Activated CD4-positive, alpha-beta memory T cell treated with anti-CD3 and anti-CD28 coated beads for 36 hours (primary cell): ENCODE measurements at regions of chr22 and their contacts with region 1.

Region 1: GRCh38 chr22:22156716-22157347 is 87.8 kb upstream of the VPREB1 start:
- DNase-seq: peak; percentile 67
- H3K4me3 Mint-ChIP-seq: no peak overlapping the region
- H3K27ac Mint-ChIP-seq: no peak overlapping the region
- H3K4me1 Mint-ChIP-seq: peaks cover 6% of the 10 kb centered on the region
- H3K27me3 Mint-ChIP-seq: peaks cover 5% of the 10 kb centered on the region

Region 2: GRCh38 chr22:21961886-21962654 is 194.8 kb before region 1 on chr22:
- CTCF ChIA-PET with region 1: no interaction called
- POLR2A ChIA-PET with region 1: no interaction called
- intact Hi-C with region 1: no loop called
- DNase-seq: no peak
- H3K4me3 Mint-ChIP-seq: no peak overlapping the region
- H3K27ac Mint-ChIP-seq: no peak overlapping the region
- H3K4me1 Mint-ChIP-seq: no peaks in the 10 kb centered on the region
- H3K27me3 Mint-ChIP-seq: no peaks in the 10 kb centered on the region

Region 3: GRCh38 chr22:22045571-22046335 is 111.1 kb before region 1 on chr22:
- CTCF ChIA-PET with region 1: no interaction called
- POLR2A ChIA-PET with region 1: no interaction called
- intact Hi-C with region 1: no loop called
- DNase-seq: no peak
- H3K4me3 Mint-ChIP-seq: no peak overlapping the region
- H3K27ac Mint-ChIP-seq: no peak overlapping the region
- H3K4me1 Mint-ChIP-seq: no peaks in the 10 kb centered on the region
- H3K27me3 Mint-ChIP-seq: peaks cover 11% of the 10 kb centered on the region

Region 4: GRCh38 chr22:22195265-22196017 is 38.6 kb after region 1 on chr22:
- CTCF ChIA-PET with region 1: interaction called, 10 read pairs
- POLR2A ChIA-PET with region 1: no interaction called
- intact Hi-C with region 1: loop called (anchors 1 kb)
- DNase-seq: peak; percentile 86
- H3K4me3 Mint-ChIP-seq: no peak overlapping the region
- H3K27ac Mint-ChIP-seq: no peak overlapping the region
- H3K4me1 Mint-ChIP-seq: no peaks in the 10 kb centered on the region
- H3K27me3 Mint-ChIP-seq: peaks cover 15% of the 10 kb centered on the region

Region 5: DNA sequence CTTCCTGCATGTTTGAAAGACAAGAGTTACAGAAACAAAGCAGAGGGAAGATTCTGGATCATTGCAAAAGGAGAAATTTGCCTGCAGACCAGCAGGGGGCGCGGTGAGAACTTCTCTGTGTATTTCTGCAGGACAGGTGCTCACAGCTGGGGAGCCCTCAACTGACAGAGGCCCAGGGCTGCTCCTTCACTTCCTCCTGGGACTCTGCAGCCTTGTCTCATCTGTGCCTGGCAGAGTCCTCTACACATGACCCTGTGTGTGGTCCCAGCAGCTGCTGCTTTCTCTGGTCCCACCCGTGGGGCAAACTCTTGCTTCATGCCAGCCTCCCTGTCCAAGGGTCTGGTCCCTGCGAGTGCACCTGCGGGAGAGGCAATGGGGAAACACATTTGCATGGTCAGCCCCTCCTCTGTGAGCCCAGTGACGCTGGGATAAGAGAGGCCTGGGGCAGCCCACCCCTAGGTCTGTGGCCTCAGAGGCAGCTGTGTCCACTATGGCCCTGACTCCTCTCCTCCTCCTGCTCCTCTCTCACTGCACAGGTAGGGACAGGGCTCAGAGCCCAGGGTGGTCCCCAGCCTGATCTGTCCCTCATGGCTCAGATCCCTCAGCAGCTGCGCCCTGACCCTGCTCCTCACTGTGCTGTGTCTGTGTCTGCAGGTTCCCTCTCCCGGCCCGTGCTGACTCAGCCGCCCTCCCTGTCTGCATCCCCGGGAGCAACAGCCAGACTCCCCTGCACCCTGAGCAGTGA is 44.5 kb after region 1 on chr22:
- CTCF ChIA-PET with region 1: interaction called, 10 read pairs
- POLR2A ChIA-PET with region 1: no interaction called
- intact Hi-C with region 1: no loop called
- DNase-seq: peak; percentile 79
- H3K4me3 Mint-ChIP-seq: no peak overlapping the region
- H3K27ac Mint-ChIP-seq: no peak overlapping the region
- H3K4me1 Mint-ChIP-seq: peaks cover 3% of the 10 kb centered on the region
- H3K27me3 Mint-ChIP-seq: peaks cover 8% of the 10 kb centered on the region

Region 6: DNA sequence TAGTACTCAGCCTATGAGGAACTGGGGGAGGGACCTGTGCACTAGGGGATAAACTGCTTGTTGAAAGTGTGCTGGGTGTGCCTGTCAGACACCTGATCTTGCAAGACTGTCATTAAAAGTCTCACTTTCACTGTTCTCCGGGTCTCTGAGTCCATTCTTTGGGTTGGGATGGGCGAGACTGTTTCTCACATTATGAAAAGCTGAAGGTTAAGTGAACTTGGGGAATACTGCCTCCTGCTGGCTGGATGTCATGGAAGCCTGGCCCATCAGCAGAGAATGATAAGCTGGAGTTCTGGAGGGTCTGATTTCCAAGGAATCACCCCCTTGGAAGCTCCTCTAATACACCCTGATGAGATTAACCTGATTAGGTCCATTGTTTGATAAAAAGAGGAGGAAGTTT is 78.7 kb after region 1 on chr22:
- CTCF ChIA-PET with region 1: interaction called, 3 read pairs
- POLR2A ChIA-PET with region 1: no interaction called
- intact Hi-C with region 1: loop called (anchors 1 kb)
- DNase-seq: peak; percentile 78
- H3K4me3 Mint-ChIP-seq: no peak overlapping the region
- H3K27ac Mint-ChIP-seq: no peak overlapping the region
- H3K4me1 Mint-ChIP-seq: peaks cover 6% of the 10 kb centered on the region
- H3K27me3 Mint-ChIP-seq: no peaks in the 10 kb centered on the region